Caco-2 (cell line): ENCODE measurements at regions of chrX and their contacts with region 1.

Region 1: GRCh38 chrX:16212436-16212835 is 45.2 kb downstream of the MAGEB17 start:
- DNase-seq: peak in 1 of 2 experiments; percentile 27
- H3K4me3 ChIP-seq: no peak overlapping the region
- H3K4me3 Mint-ChIP-seq: no peak overlapping the region
- H3K27ac Mint-ChIP-seq: no peak overlapping the region
- H3K4me1 ChIP-seq: 0 out of 2 replicates have a peak, but pooled peaks cover 5% of the 10 kb centered on the region
- H3K4me1 Mint-ChIP-seq: no peaks in the 10 kb centered on the region
- H3K27me3 ChIP-seq: no peaks in the 10 kb centered on the region
- H3K27me3 Mint-ChIP-seq: no peaks in the 10 kb centered on the region
- CTCF ChIP-seq: peak in 1 of 2 experiments; percentile 41

Region 2: DNA sequence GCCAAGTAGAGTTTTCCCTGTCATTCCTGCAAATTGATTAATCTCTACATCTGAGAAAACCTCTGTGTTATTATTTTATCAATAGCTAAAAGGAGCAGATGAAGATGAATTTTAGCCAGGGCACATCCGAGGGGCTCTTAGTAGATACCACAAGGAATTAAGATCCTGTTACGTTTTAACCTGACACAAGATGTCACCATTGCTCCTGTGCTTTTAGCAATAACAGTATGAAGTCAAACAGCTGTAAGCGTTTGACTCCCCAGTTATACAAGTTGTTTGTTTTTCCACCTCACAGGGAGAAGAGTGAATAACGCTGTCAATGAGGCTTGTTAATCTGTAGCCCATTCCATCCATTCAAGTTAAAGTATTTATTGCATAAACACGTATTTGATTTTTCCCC is 281.9 kb before region 1 on chrX:
- CTCF ChIA-PET with region 1: interaction called, 3 read pairs
- POLR2A ChIA-PET with region 1: no interaction called
- intact Hi-C with region 1: loop called (anchors 10 kb)
- DNase-seq: peak in 1 of 2 experiments; percentile 19
- H3K4me3 ChIP-seq: no peak overlapping the region
- H3K4me3 Mint-ChIP-seq: no peak overlapping the region
- H3K27ac Mint-ChIP-seq: no peak overlapping the region
- H3K4me1 ChIP-seq: peaks cover 9% of the 10 kb centered on the region; the same call in 1 of the 2 replicates
- H3K4me1 Mint-ChIP-seq: peaks cover 12% of the 10 kb centered on the region
- H3K27me3 ChIP-seq: no peaks in the 10 kb centered on the region
- H3K27me3 Mint-ChIP-seq: no peaks in the 10 kb centered on the region
- CTCF ChIP-seq: no peak

Region 3: DNA sequence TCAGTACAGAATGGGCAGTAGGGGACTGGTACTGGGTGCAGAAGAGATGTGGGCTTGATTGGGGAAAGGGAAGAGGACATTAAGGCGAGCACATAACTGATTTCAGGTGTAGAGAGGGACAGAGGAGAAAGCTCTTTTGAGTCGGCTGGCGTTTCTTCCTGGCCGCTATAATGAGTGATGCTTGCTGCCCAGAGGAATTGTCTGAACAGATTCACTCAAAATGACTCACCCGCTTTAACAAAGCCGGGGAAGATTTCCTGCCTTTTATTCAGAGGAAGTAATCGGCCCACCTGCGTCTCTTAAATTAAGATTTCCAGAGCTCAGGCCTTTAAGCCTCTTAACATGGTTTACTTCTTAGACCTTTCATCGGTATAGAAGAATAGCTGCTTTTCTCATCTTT is 255.8 kb before region 1 on chrX:
- CTCF ChIA-PET with region 1: no interaction called
- POLR2A ChIA-PET with region 1: no interaction called
- intact Hi-C with region 1: no loop called
- DNase-seq: no peak
- H3K4me3 ChIP-seq: no peak overlapping the region
- H3K4me3 Mint-ChIP-seq: no peak overlapping the region
- H3K27ac Mint-ChIP-seq: no peak overlapping the region
- H3K4me1 ChIP-seq: no peaks in the 10 kb centered on the region
- H3K4me1 Mint-ChIP-seq: no peaks in the 10 kb centered on the region
- H3K27me3 ChIP-seq: no peaks in the 10 kb centered on the region
- H3K27me3 Mint-ChIP-seq: peaks cover 2% of the 10 kb centered on the region
- CTCF ChIP-seq: no peak